Natural killer cell (primary cell): ENCODE measurements at regions of chr10 and their contacts with region 1.

Region 1: DNA sequence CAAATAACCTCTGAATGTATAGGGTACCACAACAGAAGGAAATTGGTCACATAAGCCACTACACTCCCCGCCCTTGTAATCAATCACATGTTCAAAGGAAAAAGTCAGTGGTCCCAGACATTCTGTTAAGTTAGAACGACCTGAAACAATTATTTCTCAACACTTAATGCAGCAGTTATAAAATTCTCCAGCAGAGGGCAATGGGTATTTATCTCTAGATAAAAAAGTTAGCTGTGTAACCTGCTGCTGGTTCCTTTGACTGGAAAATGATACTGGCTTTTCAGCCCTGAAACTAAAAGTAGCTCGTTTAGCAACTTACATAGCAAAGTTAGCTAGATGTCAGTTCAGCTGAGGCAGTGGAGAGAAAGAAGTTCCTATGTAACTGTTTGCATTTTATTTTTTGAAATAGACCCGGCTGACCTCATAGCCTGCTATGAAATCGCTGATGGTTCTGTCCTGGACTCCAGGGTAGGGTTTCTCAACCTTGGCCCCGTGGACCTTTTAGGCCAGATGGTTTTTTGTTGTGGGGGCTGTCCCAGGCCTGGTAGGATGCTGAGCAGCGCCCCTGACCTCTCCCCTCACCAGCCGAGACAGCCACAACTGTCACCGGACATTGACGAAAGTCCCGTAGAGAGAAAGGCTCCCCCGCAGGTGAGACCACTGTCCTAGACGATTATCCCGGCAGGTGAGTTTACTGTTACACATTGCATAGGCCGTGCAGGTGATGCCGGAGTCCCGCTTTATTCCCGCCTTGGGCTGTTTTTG is 40.2 kb upstream of the PROSER2 start:
- DNase-seq: peak in 1 of 2 donors; percentile 68
- ATAC-seq: peak; percentile 40 to 61 (median 58)
- H3K4me3 ChIP-seq: no peak overlapping the region
- H3K4me3 Mint-ChIP-seq: no peak overlapping the region
- H3K27ac ChIP-seq: no peak overlapping the region
- H3K27ac Mint-ChIP-seq: no peak overlapping the region
- H3K4me1 ChIP-seq: no peaks in the 10 kb centered on the region
- H3K4me1 Mint-ChIP-seq: no peaks in the 10 kb centered on the region
- H3K27me3 ChIP-seq: no peaks in the 10 kb centered on the region
- H3K27me3 Mint-ChIP-seq: peaks cover 0 to 11% of the 10 kb centered on the region in 2 donors
- CTCF ChIP-seq: peak; percentile 54

Region 2: GRCh38 chr10:11986593-11987216 is 203.7 kb after region 1 on chr10:
- intact Hi-C with region 1: loop called (anchors 1 kb)
- DNase-seq: peak; percentile 58 to 86
- ATAC-seq: peak; percentile 69 to 79 (median 72)
- H3K4me3 ChIP-seq: no peak overlapping the region
- H3K4me3 Mint-ChIP-seq: no peak overlapping the region
- H3K27ac ChIP-seq: no peak overlapping the region
- H3K27ac Mint-ChIP-seq: peak overlapping the region; percentile 5 to 35
- H3K4me1 ChIP-seq: no peaks in the 10 kb centered on the region
- H3K4me1 Mint-ChIP-seq: peaks cover 8% of the 10 kb centered on the region in 2 donors
- H3K27me3 ChIP-seq: no peaks in the 10 kb centered on the region
- H3K27me3 Mint-ChIP-seq: no peaks in the 10 kb centered on the region
- CTCF ChIP-seq: peak; percentile 94